Activated T-helper 2 cell treated with anti-CD3 and anti-CD28 coated beads, Interferon-gamma antibody, Interleukin-2, Interleukin-4, amounts not matched to agents 10 μg/mL and 5 μg/mL and 100 μg/mL, durations not matched to agents 14 hours and 24 hours and 36 hours (primary cell): ENCODE measurements at regions of chr12 and their contacts with region 1.

Region 1: DNA sequence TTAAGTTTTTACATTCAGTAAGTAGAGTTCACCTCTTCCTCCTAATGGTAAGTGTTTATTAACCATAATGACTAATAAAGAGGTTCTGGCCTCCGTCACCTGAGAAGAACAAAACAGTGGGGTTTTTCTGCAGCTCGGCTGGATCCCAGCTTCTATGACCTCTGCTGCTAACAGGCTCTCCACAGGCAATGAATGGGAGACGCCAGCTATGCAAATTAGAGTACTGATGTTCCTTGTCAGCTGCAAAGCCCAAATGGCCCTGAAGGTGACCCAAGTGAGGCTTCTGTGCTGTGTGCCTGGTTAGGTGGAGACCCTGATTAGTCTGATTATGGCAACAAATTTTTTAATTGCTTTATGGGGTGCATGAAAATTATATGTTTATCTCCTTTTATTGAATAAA is 218.1 kb downstream of the APAF1 start:
- DNase-seq: no peak
- H3K4me3 Mint-ChIP-seq: no peak overlapping the region
- H3K27ac Mint-ChIP-seq: no peak overlapping the region
- H3K4me1 Mint-ChIP-seq: no peaks in the 10 kb centered on the region
- H3K27me3 Mint-ChIP-seq: peaks cover 6% of the 10 kb centered on the region

Region 2: DNA sequence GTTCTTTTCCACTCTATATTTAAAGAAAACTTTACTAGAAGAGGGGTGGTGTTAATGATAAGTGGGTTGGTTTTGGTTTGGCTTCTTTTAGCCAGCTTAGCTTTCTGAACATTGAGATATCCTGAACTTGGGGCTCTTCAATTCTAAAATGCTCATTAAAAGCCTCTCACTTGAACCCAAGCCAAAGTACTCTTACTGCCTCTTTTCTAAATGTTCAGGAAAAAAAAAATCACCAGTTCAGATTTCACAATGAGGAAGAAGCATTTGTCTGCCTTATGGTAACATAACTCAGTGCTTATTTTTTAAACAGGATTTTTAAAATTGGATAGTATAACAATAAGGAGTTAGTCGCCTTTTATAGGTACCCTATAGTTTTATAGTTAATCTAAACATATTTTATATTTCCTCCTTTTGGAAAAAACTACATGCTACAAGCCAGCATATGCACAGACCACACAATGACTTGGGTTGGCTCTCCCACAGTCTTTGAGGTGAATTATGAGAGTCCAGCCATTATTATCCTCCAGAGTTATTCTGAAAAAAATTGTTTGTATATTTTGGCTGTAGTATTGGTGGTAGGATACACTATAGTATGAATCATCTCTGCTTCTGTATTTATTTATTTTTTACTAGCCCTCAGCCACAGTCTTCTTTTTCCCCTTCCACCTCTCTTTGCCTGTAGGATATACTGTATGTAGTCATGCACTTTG is 543.3 kb before region 1 on chr12:
- intact Hi-C with region 1: loop called (anchors 10 kb)
- DNase-seq: no peak
- H3K4me3 Mint-ChIP-seq: no peak overlapping the region
- H3K27ac Mint-ChIP-seq: no peak overlapping the region
- H3K4me1 Mint-ChIP-seq: no peaks in the 10 kb centered on the region
- H3K27me3 Mint-ChIP-seq: peaks cover 3% of the 10 kb centered on the region